HCT116 (cell line): ENCODE measurements at regions of chr5 and their contacts with region 1.

Region 1: GRCh38 chr5:9898319-9898718 is 268.2 kb upstream of the TAS2R1 start:
- DNase-seq: peak; percentile 8
- ATAC-seq: peak; percentile 77
- H3K4me3 ChIP-seq: no peak overlapping the region
- H3K27ac ChIP-seq: no peak overlapping the region
- H3K4me1 ChIP-seq: no peaks in the 10 kb centered on the region
- H3K27me3 ChIP-seq: no peaks in the 10 kb centered on the region
- CTCF ChIP-seq: peak; percentile 30 to 58 (median 47); a peak in 5 of 6 replicates
- POLR2A ChIP-seq: no peak
- RAD21 ChIP-seq: peak; percentile 32; the same call in 1 of the 2 replicates

Region 2: DNA sequence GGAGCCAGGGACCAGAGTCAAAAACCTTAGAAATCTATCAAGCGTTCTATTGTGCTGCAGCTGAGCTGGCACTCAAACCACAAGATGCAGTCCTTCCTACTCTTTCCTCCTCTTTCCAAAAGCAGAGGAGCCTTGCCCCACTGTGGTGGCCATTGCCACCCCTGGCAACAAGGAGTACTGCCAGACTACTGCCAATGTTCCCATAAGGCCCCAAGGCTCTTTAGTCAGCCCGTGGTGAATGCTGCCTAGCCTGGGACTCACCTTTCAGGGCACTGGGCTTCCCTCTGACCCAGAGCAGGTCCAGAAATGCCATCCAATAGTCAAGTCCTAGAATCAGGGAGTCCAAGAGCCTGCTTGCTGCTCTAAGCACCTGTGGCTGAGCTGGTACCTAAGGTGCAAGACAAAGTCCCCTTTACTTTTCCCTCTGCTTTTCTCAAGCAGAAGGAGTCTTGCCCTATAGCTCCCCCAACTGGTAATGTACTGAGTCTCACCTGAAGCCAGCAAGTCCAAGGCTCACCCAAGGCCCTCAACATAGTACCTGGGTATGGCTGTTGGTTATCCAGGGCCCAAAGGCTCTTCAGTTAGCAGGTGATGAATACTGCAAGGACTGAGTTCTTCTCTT is 132.0 kb after region 1 on chr5:
- CTCF ChIA-PET with region 1: interaction called, 3 read pairs
- POLR2A ChIA-PET with region 1: no interaction called
- RAD21 ChIA-PET with region 1: no interaction called
- intact Hi-C with region 1: loop called (anchors 1 kb)
- DNase-seq: peak; percentile 23
- ATAC-seq: peak; percentile 67
- H3K4me3 ChIP-seq: no peak overlapping the region
- H3K27ac ChIP-seq: no peak overlapping the region
- H3K4me1 ChIP-seq: no peaks in the 10 kb centered on the region
- H3K27me3 ChIP-seq: no peaks in the 10 kb centered on the region
- CTCF ChIP-seq: peak; percentile 13 to 49 (median 37); a peak in 5 of 6 replicates
- POLR2A ChIP-seq: no peak
- RAD21 ChIP-seq: peak; percentile 58

Region 3: GRCh38 chr5:10111571-10111970 is 213.3 kb after region 1 on chr5:
- CTCF ChIA-PET with region 1: interaction called, 3 read pairs
- POLR2A ChIA-PET with region 1: no interaction called
- RAD21 ChIA-PET with region 1: interaction called in 1 of 2 experiments, 6 read pairs
- intact Hi-C with region 1: loop called (anchors 1 kb)
- DNase-seq: peak; percentile 21
- ATAC-seq: peak; percentile 98
- H3K4me3 ChIP-seq: no peak overlapping the region
- H3K27ac ChIP-seq: no peak overlapping the region
- H3K4me1 ChIP-seq: 0 out of 4 replicates have a peak, but pooled peaks cover 0 to 3% of the 10 kb centered on the region in 2 experiments
- H3K27me3 ChIP-seq: no peaks in the 10 kb centered on the region
- CTCF ChIP-seq: peak; percentile 29 to 75 (median 72); a peak in 4 of 6 replicates
- POLR2A ChIP-seq: no peak
- RAD21 ChIP-seq: peak; percentile 58